ENCODE measurements at regions of chr1 and their contacts with region 1.

Region 1: GRCh38 chr1:95084317-95085176 is 11.8 kb upstream of the ALG14 start:
- DNase-seq: peak; percentile 17 to 53
- H3K4me3 ChIP-seq: no peak overlapping the region
- H3K27ac ChIP-seq: no peak overlapping the region
- H3K4me1 ChIP-seq: peaks cover 3 to 13% (median 10%) of the 10 kb centered on the region in 4 experiments
- H3K27me3 ChIP-seq: no peaks in the 10 kb centered on the region
- CTCF ChIP-seq: peak in 2 of 3 experiments; percentile 62 to 79; a peak in 3 of 4 replicates
- EP300 ChIP-seq: no peak
- POLR2A ChIP-seq: no peak
- RAD21 ChIP-seq: peak; percentile 64 to 72

Region 2: GRCh38 chr1:94986783-94987182 is 97.8 kb before region 1 on chr1:
- CTCF ChIA-PET with region 1: no interaction called
- POLR2A ChIA-PET with region 1: no interaction called
- DNase-seq: no peak
- H3K4me3 ChIP-seq: no peak overlapping the region
- H3K27ac ChIP-seq: no peak overlapping the region
- H3K4me1 ChIP-seq: no peaks in the 10 kb centered on the region
- H3K27me3 ChIP-seq: no peaks in the 10 kb centered on the region; a peak in 1 of 7 replicates
- CTCF ChIP-seq: no peak
- EP300 ChIP-seq: no peak
- POLR2A ChIP-seq: no peak
- RAD21 ChIP-seq: no peak

Region 3: GRCh38 chr1:95035536-95035935 is 49.0 kb before region 1 on chr1:
- CTCF ChIA-PET with region 1: no interaction called
- POLR2A ChIA-PET with region 1: no interaction called
- DNase-seq: no peak
- H3K4me3 ChIP-seq: no peak overlapping the region
- H3K27ac ChIP-seq: no peak overlapping the region
- H3K4me1 ChIP-seq: no peaks in the 10 kb centered on the region; a peak in 1 of 7 replicates
- H3K27me3 ChIP-seq: no peaks in the 10 kb centered on the region; a peak in 1 of 7 replicates
- CTCF ChIP-seq: no peak
- EP300 ChIP-seq: no peak
- POLR2A ChIP-seq: no peak
- RAD21 ChIP-seq: no peak

Region 4: DNA sequence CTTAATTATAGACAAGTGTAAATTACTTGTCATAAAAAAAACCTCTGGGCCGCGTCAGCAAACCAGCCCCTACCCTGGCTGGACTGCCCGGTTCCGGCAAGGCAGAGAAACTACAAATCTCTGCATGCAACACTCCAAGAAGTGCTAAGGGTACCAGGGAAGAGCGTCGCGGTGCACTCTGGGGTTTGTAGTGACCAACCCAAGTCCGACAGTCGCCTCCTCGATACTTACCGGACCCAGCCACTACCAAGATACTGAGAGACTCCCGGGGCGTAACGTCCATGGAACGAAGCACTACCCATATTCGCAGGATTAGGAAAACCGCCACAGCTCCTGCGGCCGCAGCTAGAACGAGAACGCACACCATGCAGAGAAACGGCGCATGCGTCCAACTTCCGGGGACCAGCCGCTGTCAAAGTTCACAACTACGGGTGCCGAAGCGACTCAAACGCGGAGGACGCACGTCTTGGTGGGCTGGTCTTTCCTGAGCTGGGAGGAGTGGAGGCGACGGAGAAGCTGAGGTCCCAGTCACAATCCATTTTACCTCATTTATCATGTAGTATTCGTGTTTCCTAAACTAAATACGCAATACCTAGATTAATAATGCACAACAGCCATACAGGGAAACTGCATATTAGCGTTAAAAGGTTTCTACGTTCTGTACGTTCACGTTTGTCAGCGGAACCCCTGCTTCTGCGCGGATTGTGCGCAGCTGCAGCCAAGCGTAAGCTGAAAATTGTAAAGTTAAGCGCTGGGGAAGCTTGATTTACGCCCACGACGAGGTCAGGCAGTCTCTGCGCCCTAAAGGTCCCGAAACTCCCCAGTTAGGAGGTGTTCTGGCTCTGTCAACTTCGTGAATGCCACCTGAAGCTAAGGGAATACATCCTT is 11.8 kb before region 1 on chr1 and contains the start of gene ALG14:
- CTCF ChIA-PET with region 1: interaction called, 24 read pairs
- POLR2A ChIA-PET with region 1: interaction called, 4 read pairs
- DNase-seq: peak; percentile 79 to 90
- H3K4me3 ChIP-seq: peak within 1 kb of the TSS; percentile 81 to 95 (median 88)
- H3K27ac ChIP-seq: no peak within 1 kb of the TSS
- H3K4me1 ChIP-seq: no peaks in the 10 kb centered on the region
- H3K27me3 ChIP-seq: no peaks in the 10 kb centered on the region
- CTCF ChIP-seq: no peak
- EP300 ChIP-seq: no peak
- POLR2A ChIP-seq: no peak
- RAD21 ChIP-seq: no peak
- total RNA-seq, gene ALG14: 1.3 TPM in 2 replicates

Region 5: GRCh38 chr1:95095833-95096217 is 11.3 kb after region 1 on chr1:
- CTCF ChIA-PET with region 1: interaction called, 16 read pairs
- POLR2A ChIA-PET with region 1: no interaction called
- DNase-seq: no peak
- H3K4me3 ChIP-seq: no peak overlapping the region
- H3K27ac ChIP-seq: no peak overlapping the region
- H3K4me1 ChIP-seq: no peaks in the 10 kb centered on the region
- H3K27me3 ChIP-seq: no peaks in the 10 kb centered on the region
- CTCF ChIP-seq: no peak
- EP300 ChIP-seq: no peak
- POLR2A ChIP-seq: no peak
- RAD21 ChIP-seq: no peak

Region 6: DNA sequence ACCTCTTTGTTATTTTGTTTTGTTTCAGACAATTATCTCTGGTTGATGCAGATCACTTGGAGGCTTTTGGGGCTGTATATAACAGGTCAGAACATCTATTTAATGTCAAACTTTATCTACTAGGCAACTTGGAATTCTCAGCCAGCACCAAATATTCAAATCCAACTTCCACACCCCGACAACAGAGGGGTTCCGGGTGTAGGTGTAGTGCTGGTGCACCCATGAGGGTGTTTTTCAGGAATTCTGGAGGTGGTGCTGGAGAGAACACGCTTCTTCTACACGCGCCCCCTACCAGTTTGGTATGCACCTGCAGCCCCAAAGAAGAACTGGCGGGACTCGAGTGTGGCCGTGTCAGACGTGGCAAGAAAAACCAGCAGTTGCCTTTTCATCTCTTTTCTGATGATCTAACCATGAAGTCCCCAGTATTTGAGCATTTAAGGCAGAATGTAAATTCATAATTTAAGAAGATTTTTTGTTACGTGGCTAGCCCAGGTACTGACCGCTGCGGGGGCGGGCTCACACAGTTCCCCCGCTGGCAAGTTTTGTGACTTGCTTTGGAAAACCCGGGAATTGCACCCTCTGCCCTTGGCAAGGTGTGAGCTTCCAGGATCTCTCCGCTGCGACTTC is 32.1 kb after region 1 on chr1:
- CTCF ChIA-PET with region 1: interaction called, 35 read pairs
- POLR2A ChIA-PET with region 1: no interaction called
- DNase-seq: peak in 1 of 2 experiments; percentile 78
- H3K4me3 ChIP-seq: peak overlapping the region; percentile 70 to 86 (median 78)
- H3K27ac ChIP-seq: no peak overlapping the region
- H3K4me1 ChIP-seq: no peaks in the 10 kb centered on the region; a peak in 1 of 7 replicates
- H3K27me3 ChIP-seq: peaks cover 0 to 4% (median 2%) of the 10 kb centered on the region in 4 experiments; a peak in 3 of 7 replicates
- CTCF ChIP-seq: peak; percentile 69 to 76 (median 75)
- EP300 ChIP-seq: 0 out of 3 replicates have a peak, but pooled peaks of 1 of the 2 experiments have one; percentile 34
- POLR2A ChIP-seq: no peak
- RAD21 ChIP-seq: peak; percentile 35 to 62

Region 7: GRCh38 chr1:95127380-95127779 is 42.8 kb after region 1 on chr1:
- CTCF ChIA-PET with region 1: interaction called, 10 read pairs
- POLR2A ChIA-PET with region 1: no interaction called
- DNase-seq: no peak
- H3K4me3 ChIP-seq: no peak overlapping the region
- H3K27ac ChIP-seq: no peak overlapping the region
- H3K4me1 ChIP-seq: no peaks in the 10 kb centered on the region
- H3K27me3 ChIP-seq: no peaks in the 10 kb centered on the region
- CTCF ChIP-seq: no peak
- EP300 ChIP-seq: no peak
- POLR2A ChIP-seq: no peak
- RAD21 ChIP-seq: no peak

Region 8: DNA sequence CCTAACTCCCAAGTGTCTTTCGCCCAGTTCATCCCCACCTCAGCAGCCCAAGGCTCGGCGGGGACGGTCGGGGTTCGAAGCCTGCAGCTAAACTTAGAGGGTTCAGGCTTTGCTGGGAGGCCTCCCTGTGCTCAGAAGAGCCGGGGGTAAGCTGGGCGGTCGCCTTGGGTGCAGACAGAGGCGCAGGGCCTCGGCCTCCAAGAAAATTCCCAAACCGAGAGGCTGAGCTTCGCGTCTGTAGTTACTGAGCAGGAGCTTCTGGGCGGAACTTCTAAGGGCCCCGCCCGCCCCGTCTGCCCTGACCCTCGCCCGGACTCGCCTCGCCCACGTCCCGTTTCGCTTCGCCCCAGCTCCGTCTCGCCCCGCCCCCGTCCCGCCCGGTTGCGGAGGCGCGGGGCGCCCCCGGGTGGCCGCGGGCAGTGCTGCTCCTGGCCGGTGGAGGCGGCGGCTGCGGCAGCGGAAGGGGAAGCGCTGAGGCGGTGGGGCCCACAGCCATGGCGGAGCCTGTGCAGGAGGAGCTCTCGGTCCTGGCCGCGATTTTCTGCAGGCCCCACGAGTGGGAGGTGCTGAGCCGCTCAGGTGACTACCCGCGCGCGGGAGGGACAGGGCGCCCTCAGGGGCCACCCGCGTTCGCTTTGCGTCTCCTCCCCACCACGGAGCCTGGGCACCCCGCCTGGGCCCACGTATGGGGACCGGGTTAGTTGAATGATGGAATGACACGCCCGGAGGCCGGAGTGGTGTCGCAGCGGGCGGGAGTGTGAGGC is 149.4 kb after region 1 on chr1 and contains the start of gene RWDD3:
- CTCF ChIA-PET with region 1: interaction called, 20 read pairs
- POLR2A ChIA-PET with region 1: interaction called, 6 read pairs
- DNase-seq: peak; percentile 78 to 96
- H3K4me3 ChIP-seq: peak within 1 kb of the TSS; percentile 76 to 93 (median 84)
- H3K27ac ChIP-seq: peak within 1 kb of the TSS; percentile 75; the same call in 1 of the 2 replicates
- H3K4me1 ChIP-seq: peaks cover 0 to 4% (median 1%) of the 10 kb centered on the region in 4 experiments; a peak in 4 of 7 replicates
- H3K27me3 ChIP-seq: peaks cover 0 to 3% (median 0%) of the 10 kb centered on the region in 4 experiments; a peak in 2 of 7 replicates
- CTCF ChIP-seq: peak; percentile 80 to 94 (median 80)
- EP300 ChIP-seq: 0 out of 3 replicates have a peak, but pooled peaks of 1 of the 2 experiments have one; percentile 63
- POLR2A ChIP-seq: peak; percentile 39 to 75
- RAD21 ChIP-seq: peak; percentile 70 to 91
- total RNA-seq, gene RWDD3: 12.3 and 14.5 TPM in 2 replicates

Measured in H1 (cell line).